ENCODE measurements at regions of chr10 and their contacts with region 1.

Region 1: GRCh38 chr10:43221419-43222209 is 45.3 kb downstream of the RASGEF1A start:
- DNase-seq: peak; percentile 46
- ATAC-seq: peak; percentile 37
- H3K4me3 Mint-ChIP-seq: no peak overlapping the region
- H3K27ac Mint-ChIP-seq: no peak overlapping the region
- H3K4me1 Mint-ChIP-seq: peaks cover 22% of the 10 kb centered on the region
- H3K27me3 Mint-ChIP-seq: peaks cover 9% of the 10 kb centered on the region

Region 2: GRCh38 chr10:43255634-43256431 is 34.2 kb after region 1 on chr10:
- CTCF ChIA-PET with region 1: interaction called, 11 read pairs
- DNase-seq: peak; percentile 75
- ATAC-seq: peak; percentile 84
- H3K4me3 Mint-ChIP-seq: no peak overlapping the region
- H3K27ac Mint-ChIP-seq: peak overlapping the region; percentile 74
- H3K4me1 Mint-ChIP-seq: peaks cover 9% of the 10 kb centered on the region
- H3K27me3 Mint-ChIP-seq: no peaks in the 10 kb centered on the region

Measured in activated CD8-positive, alpha-beta memory T cell treated with anti-CD3 and anti-CD28 coated beads, Interleukin-2, amount 10 ng/mL, durations not matched to agents 7 days and 5 days (primary cell).